GM10248 (cell line): ENCODE measurements at regions of chr20 and their contacts with region 1.

Region 1: DNA sequence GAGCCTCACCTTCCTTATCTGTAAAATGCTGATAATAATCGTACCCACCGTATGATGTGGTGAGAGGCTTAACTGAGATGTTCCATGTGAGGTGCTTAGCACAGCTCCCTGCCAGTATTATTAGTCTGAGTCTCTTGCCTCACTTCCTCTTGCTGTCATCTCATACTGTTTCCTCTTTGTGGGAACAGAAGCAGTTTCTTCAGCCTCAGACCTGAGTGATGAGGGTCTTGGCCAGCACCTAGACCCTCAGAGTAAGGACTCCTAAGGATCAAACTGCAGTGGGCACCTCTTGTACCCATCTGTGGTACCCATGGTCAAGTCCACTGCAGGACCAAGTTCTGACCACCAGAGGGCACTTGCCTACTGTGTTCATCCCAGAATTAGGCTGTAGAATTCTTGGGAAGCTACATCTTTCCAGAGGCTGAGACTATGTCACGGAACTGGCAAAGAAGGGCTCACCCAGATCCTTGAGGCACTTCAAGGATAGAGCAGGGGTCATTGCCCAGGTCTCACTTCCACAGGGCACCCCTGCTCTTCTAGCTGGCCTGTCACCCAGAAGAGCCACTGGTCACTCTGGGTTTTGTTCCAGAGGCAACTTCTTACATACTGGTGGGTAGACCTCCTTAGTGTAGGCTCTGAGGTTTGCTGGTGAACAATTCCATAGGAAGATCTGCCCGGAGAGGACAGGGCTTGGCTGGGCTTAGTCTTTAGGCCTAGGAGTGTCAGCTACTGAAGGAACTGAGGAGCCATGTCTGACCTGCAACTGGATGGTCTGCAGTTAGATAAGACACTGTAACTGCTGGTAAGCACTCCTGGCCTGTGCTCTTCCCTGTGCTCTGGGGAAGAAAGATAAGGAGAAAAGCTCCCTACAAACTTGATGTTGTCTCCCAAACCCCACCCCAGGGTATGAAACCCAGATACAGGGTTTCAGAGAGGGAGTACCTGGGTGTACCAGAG is 20.6 kb upstream of the SGK2 start:
- DNase-seq: peak; percentile 57
- CTCF ChIP-seq: peak; percentile 84

Region 2: DNA sequence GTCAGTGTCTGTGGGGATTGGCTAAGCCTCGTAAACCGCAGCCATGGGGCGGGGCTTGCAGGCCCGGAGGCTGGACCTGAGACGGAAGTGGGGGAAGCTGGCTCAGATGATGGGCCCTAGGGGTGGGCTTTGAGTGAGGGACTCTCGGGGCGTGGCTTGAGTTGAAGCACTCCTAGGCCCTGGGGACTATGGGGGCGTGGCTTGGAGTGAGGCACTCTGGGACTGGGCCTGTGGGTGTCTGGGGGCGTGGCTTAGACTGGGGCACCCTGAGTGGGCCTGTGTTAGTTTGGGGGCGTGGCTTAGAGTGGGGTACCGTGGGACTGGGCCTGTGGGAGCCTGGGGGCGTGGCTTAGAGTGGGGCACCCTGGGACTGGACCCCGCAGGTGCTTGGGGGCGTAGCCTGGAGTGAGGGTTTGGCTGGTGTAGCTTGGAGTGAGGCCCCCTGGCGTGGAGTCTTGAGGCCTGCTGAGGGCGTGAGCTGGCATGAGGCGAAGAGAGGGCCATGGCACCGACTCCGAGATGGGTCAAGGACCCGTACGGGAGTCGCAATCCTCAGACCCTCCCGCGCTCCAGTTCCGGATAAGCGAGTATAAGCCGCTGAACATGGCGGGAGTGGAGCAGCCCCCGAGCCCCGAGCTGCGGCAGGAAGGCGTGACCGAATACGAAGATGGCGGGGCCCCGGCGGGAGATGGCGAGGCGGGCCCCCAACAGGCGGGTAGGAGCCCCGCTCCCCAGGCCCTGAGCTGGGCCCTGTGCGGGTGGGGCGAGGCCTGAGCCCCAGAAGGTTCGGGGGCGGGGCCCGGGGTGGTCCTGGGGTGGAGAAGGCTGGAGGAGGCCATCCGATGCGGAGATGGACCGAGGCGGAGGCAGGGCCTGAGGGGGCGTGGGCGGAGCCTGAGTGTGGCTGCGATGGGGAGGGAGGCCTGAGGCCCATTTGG is 23.9 kb before region 1 on chr20:
- CTCF ChIA-PET with region 1: interaction called, 16 read pairs
- POLR2A ChIA-PET with region 1: no interaction called
- DNase-seq: peak; percentile 97
- CTCF ChIP-seq: peak; percentile 22

Region 3: DNA sequence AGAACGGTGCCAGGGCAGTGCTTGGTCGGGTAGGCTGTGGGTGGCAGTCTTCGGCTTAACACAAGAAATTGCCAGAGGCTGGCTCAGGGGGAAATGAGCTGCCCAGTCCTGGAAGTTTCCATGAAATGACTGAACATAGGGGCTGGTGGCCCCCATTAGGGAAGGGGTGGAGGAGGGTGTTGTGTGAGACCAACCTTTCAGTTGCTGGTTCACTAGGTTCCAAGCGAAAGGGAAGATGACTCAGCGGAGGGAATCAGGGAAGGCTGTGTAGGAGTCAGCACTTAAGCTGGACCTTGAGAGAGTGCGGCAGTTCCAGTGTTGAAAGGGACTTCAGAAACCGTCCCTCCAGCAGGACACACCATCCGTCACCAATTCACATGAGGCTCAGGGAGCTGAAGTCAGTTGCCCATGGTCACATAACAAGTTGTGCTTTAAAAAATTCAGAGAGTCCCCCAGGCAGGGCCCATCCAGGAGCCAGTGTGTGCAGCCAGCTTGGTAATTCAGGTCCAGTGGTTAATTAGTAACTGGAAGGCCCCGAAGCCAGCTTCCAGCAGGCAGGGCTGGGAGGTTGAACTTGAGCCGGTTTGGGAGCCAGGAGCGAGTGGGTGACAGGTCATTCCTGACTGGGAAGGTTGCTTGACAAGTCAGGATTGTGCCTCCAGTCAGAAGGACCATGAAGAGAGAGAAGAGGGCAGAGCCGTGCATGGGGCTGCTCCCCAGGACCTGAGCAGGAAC is 20.4 kb after region 1 on chr20 and contains the start of gene SGK2:
- CTCF ChIA-PET with region 1: interaction called, 30 read pairs
- POLR2A ChIA-PET with region 1: no interaction called
- DNase-seq: no peak
- CTCF ChIP-seq: no peak

Region 4: GRCh38 chr20:43666376-43667328 is 128.5 kb after region 1 on chr20 and contains the start of gene MYBL2:
- CTCF ChIA-PET with region 1: interaction called, 12 read pairs
- POLR2A ChIA-PET with region 1: no interaction called
- DNase-seq: peak; percentile 92
- CTCF ChIP-seq: no peak

Region 5: GRCh38 chr20:44080646-44081267 is 542.6 kb after region 1 on chr20:
- CTCF ChIA-PET with region 1: interaction called, 46 read pairs
- POLR2A ChIA-PET with region 1: no interaction called
- DNase-seq: peak; percentile 86
- CTCF ChIP-seq: peak; percentile 95